ENCODE measurements at regions of chr22 and their contacts with region 1.

Region 1: GRCh38 chr22:21641789-21642583 is at the start of gene SDF2L1:
- DNase-seq: peak; percentile 94 to 97
- ATAC-seq: peak; percentile 92 to 94
- H3K4me3 ChIP-seq: peak within 1 kb of the TSS; percentile 71
- H3K27ac ChIP-seq: peak within 1 kb of the TSS; percentile 70 to 89
- H3K4me1 ChIP-seq: peaks cover 10% of the 10 kb centered on the region; the same call in 2 of the 3 replicates
- CTCF ChIP-seq: no peak; the same call in 2 of the 3 replicates
- EP300 ChIP-seq: no peak
- POLR2A ChIP-seq: peak; percentile 81
- RAD21 ChIP-seq: no peak
- polyA plus RNA-seq, gene SDF2L1: 13.7 and 17.5 TPM in 2 replicates

Region 2: GRCh38 chr22:21593406-21594232 is 48.4 kb before region 1 on chr22:
- CTCF ChIA-PET with region 1: interaction called, 10 read pairs
- POLR2A ChIA-PET with region 1: no interaction called
- DNase-seq: peak; percentile 31 to 41
- ATAC-seq: peak; percentile 91 to 94
- H3K4me3 ChIP-seq: no peak overlapping the region
- H3K27ac ChIP-seq: no peak overlapping the region
- H3K4me1 ChIP-seq: no peaks in the 10 kb centered on the region
- CTCF ChIP-seq: peak; percentile 21
- EP300 ChIP-seq: no peak
- POLR2A ChIP-seq: no peak
- RAD21 ChIP-seq: peak in 1 of 2 experiments; percentile 33; a peak in 2 of 5 replicates

Region 3: DNA sequence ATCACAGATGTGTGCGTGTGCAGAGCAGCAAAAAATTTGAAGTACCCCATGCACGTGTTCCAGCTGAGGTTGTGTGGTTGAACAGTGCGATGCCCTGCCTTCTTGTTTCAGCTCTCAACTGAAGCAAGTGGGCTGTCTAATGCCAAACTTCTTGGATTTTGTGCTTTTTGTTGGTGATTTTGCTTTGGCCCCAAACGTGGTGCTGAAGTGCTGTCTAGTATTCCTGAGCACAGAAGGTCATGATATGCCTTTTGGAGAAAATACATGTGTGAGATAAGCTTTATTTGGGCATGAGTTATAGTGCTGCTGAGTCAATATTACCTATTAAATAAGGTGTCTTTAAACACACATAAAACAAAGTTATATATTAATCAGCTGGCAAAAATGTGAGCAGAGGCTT is 26.3 kb before region 1 on chr22:
- CTCF ChIA-PET with region 1: interaction called, 19 read pairs
- POLR2A ChIA-PET with region 1: no interaction called
- DNase-seq: no peak
- ATAC-seq: no peak
- H3K4me3 ChIP-seq: no peak overlapping the region
- H3K27ac ChIP-seq: no peak overlapping the region
- H3K4me1 ChIP-seq: peaks cover 6% of the 10 kb centered on the region; the same call in 1 of the 3 replicates
- CTCF ChIP-seq: no peak
- EP300 ChIP-seq: no peak
- POLR2A ChIP-seq: no peak
- RAD21 ChIP-seq: no peak

Region 4: DNA sequence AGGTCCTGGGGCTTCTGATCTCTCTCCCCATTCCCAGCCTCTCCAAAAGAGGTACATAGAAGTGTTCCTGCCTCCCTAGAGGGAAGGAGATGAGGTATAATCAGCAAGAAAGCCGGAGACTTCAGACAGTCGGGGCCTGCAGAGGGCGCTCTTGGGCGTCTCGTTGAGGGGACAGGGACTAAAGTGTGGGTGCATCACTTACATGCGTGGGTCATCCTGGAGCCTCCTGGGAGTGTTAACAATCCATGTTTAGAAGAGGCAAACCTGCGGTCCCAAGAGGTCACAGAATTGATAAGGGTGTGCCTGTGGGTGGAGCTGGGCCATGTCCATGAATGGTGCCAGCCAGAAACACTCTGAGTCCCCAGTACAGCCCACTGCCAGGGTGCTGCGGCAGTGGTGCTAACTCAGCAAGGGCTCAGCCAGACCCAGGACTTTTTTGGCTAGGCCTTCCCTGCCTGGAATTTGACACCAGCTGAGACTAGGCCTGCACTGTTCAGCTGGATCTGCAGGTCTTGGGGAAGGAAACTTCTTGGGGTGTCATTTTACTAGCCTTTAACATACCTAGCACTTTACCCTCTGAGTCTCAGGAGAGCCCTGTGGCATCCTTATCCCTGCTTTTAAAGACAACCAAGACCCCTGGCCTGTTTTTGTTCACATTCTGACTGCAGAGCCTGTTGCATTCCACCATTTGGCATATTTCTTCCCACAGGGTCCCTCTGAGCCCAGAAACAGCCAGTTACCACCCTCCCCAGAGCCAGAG is 17.7 kb before region 1 on chr22:
- CTCF ChIA-PET with region 1: interaction called, 133 read pairs
- POLR2A ChIA-PET with region 1: interaction called, 30 read pairs
- DNase-seq: peak in 1 of 2 experiments; percentile 31
- ATAC-seq: peak; percentile 53 to 58
- H3K4me3 ChIP-seq: no peak overlapping the region
- H3K27ac ChIP-seq: 0 out of 6 replicates have a peak overlapping the region, but pooled peaks of 1 of the 2 experiments have one; percentile 46
- H3K4me1 ChIP-seq: peaks cover 15% of the 10 kb centered on the region; the same call in 1 of the 3 replicates
- CTCF ChIP-seq: peak; percentile 52
- EP300 ChIP-seq: no peak
- POLR2A ChIP-seq: no peak
- RAD21 ChIP-seq: no peak

Region 5: GRCh38 chr22:21629262-21630149 is 12.5 kb before region 1 on chr22 and contains the start of gene YDJC:
- CTCF ChIA-PET with region 1: interaction called, 133 read pairs
- POLR2A ChIA-PET with region 1: interaction called, 30 read pairs
- DNase-seq: peak; percentile 76 to 92
- ATAC-seq: peak; percentile 90 to 92
- H3K4me3 ChIP-seq: peak within 1 kb of the TSS; percentile 98
- H3K27ac ChIP-seq: peak within 1 kb of the TSS; percentile 98 to 100
- H3K4me1 ChIP-seq: peaks cover 9% of the 10 kb centered on the region; the same call in 1 of the 3 replicates
- CTCF ChIP-seq: peak; percentile 54
- EP300 ChIP-seq: no peak
- POLR2A ChIP-seq: peak; percentile 79
- RAD21 ChIP-seq: peak in 1 of 2 experiments; percentile 24; a peak in 2 of 5 replicates
- polyA plus RNA-seq, gene YDJC: 24.8 and 27.0 TPM in 2 replicates

Region 6: GRCh38 chr22:21652010-21652546 is 10.1 kb after region 1 on chr22:
- CTCF ChIA-PET with region 1: interaction called, 24 read pairs
- POLR2A ChIA-PET with region 1: no interaction called
- DNase-seq: peak; percentile 72 to 88
- ATAC-seq: peak; percentile 96 to 99
- H3K4me3 ChIP-seq: peak overlapping the region; percentile 55
- H3K27ac ChIP-seq: peak overlapping the region; percentile 63 to 87
- H3K4me1 ChIP-seq: no peaks in the 10 kb centered on the region
- CTCF ChIP-seq: no peak
- EP300 ChIP-seq: no peak
- POLR2A ChIP-seq: no peak
- RAD21 ChIP-seq: no peak

Region 7: DNA sequence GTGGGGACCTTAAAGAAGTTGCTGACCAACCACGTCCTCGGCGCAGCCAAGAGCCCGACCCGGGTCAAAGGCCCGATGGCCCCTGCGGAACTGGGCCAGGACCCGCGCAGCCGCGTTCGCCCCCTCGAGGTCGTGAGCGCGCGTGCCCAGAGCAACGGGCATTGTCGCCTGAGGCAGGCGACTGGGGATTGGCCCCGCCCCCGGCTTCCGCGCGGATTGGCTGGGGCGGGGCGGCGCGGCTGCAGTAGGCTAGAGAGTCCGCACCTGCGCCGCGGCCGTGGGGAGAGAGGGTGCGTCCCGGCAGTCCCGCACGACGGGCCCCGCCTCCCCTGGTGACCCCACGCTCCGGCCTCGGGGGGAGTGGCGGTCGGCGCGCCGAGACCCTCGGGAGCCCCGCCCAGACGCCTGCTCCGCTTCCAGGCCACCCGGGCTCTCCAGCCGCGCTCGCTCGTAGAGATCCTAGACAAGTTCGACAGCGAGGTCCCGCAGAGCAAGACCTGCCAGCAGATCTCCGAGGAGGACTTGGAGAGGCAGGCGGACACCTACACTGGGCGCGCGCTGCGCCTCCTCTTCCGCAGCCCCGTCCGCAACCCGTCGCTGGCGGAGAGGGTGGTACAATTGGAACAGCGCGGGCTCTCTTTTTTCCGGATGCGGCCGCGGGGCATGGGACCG is 15.5 kb after region 1 on chr22:
- CTCF ChIA-PET with region 1: interaction called, 24 read pairs
- POLR2A ChIA-PET with region 1: no interaction called
- DNase-seq: peak; percentile 52 to 75
- ATAC-seq: peak; percentile 91
- H3K4me3 ChIP-seq: peak overlapping the region; percentile 52
- H3K27ac ChIP-seq: peak overlapping the region; percentile 52 to 88
- H3K4me1 ChIP-seq: 0 out of 3 replicates have a peak, but pooled peaks cover 4% of the 10 kb centered on the region
- CTCF ChIP-seq: no peak
- EP300 ChIP-seq: no peak
- POLR2A ChIP-seq: peak; percentile 21; the same call in 1 of the 2 replicates
- RAD21 ChIP-seq: no peak

Region 8: GRCh38 chr22:21719024-21719423 is 77.0 kb after region 1 on chr22:
- CTCF ChIA-PET with region 1: no interaction called
- POLR2A ChIA-PET with region 1: no interaction called
- DNase-seq: no peak
- ATAC-seq: no peak
- H3K4me3 ChIP-seq: no peak overlapping the region
- H3K27ac ChIP-seq: no peak overlapping the region
- H3K4me1 ChIP-seq: no peaks in the 10 kb centered on the region
- CTCF ChIP-seq: no peak
- EP300 ChIP-seq: no peak
- POLR2A ChIP-seq: no peak
- RAD21 ChIP-seq: no peak